Activated CD4-positive, alpha-beta T cell treated with anti-CD3 and anti-CD28 coated beads, Interleukin-2, amount 10 ng/mL, durations not matched to agents 24 days and 14 days (primary cell): ENCODE measurements at regions of chr5 and their contacts with region 1.

Region 1: DNA sequence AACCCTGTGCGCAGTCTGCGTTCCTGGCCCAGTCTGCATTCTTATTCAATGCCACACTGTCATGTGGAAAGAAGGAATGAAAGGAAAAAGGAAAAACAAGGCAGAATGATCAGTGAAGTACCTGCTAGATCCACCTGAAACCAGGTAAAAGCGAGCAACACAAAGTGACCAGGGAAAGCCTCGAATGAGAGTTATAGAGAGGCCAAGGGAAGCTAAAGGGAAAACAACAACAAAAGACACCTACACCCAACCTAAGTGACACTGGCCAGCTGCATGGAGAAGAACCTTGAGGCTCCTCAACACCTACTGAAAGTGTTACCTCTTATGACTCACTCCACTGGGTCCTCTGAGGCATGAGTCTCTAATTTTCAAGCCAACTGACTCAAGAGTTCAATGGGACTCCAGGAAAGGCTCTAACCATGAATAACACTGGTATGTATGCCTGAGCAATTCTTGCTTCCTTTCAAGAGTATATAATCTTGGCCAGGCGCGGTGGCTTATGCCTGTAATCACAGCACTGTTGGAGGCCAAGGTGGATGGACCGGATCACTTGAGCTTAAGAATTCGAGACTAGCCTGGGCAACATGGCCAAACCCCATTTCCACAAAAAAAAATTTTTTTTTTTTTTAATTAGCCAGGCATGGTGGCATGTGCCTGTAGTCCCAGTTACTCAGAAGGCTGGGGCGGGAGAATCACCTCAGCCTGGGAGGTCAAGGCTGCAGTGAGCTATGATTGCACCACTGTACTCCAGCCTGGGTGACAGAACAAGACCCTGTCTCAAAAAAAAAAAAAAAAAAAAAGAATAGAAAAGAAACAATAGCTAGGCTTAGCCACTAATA is 29.0 kb downstream of the MTMR12 start:
- DNase-seq: peak; percentile 61
- H3K4me3 Mint-ChIP-seq: no peak overlapping the region
- H3K27ac Mint-ChIP-seq: peak overlapping the region; percentile 14
- H3K4me1 Mint-ChIP-seq: peaks cover 36% of the 10 kb centered on the region
- H3K27me3 Mint-ChIP-seq: no peaks in the 10 kb centered on the region

Region 2: DNA sequence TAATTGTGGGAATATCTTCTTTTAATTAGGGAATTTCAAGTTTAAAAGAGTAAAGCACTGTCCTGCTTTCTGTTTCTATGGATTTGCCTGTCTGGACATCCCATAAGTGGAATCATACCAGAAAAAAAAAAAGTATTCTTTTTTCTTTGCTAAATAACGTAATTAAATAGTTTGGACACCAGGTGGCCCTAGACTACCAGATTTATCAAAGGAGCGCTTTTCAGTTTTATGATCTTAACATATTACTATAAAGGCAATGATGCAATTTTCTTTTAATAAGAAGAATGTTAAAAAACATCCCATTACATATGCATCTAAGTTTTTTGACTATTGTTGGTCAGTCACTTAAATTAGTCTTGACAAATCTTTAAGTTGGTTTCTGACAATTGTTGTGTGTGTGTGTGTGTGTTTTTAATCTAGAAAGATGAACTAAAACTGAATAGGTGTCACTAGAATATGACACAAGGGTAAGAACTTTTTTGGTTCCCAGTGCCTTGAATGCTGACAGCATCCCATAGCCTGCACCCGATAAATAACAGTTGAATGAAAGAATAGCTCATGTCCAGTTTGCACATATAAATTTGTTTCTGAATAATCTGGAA is 702.2 kb before region 1 on chr5:
- intact Hi-C with region 1: loop called (anchors 5 kb)
- DNase-seq: no peak
- H3K4me3 Mint-ChIP-seq: no peak overlapping the region
- H3K27ac Mint-ChIP-seq: no peak overlapping the region
- H3K4me1 Mint-ChIP-seq: no peaks in the 10 kb centered on the region
- H3K27me3 Mint-ChIP-seq: peaks cover 15% of the 10 kb centered on the region

Region 3: DNA sequence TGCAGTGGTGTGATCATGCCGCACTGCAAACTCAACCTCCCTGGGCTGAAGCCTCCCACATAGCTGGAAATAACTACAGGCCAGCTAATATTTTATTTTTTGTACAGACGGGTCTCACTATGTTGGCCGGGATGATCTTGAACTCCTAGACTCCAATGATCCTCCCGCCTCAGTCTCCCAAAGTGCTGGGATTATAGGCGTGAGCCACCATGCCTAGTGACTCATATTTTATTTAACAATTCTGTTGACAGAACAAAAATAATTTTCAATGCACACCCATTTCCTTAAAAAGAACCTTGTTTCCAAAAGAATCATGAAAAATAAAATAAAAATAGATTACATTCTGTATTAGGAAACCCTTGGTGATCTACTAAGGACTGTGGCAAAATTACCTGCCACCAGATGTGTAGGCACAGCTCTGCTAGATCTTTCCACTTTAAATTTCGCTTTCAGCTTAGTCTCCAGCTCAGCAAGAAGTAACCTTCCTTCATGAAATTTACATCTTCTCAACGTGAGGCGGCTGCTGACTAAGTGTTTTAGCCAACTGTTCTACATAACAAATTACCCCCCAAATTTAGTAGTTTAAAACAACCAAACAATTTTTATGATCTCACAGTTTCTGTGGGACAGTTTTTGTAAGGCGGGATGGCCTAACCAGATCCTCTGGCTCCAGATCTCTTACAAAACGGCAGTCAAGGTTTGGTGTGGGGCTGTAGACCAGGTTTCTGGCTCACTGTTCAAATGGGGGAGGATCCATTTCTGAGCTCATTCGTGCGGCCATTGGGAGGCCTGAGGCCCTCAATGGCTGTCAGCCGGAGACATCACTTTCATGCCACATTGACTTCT is 77.0 kb before region 1 on chr5:
- intact Hi-C with region 1: loop called (anchors 2 kb)
- DNase-seq: no peak
- H3K4me3 Mint-ChIP-seq: no peak overlapping the region
- H3K27ac Mint-ChIP-seq: peak overlapping the region; percentile 62
- H3K4me1 Mint-ChIP-seq: peaks cover 17% of the 10 kb centered on the region
- H3K27me3 Mint-ChIP-seq: no peaks in the 10 kb centered on the region

Region 4: DNA sequence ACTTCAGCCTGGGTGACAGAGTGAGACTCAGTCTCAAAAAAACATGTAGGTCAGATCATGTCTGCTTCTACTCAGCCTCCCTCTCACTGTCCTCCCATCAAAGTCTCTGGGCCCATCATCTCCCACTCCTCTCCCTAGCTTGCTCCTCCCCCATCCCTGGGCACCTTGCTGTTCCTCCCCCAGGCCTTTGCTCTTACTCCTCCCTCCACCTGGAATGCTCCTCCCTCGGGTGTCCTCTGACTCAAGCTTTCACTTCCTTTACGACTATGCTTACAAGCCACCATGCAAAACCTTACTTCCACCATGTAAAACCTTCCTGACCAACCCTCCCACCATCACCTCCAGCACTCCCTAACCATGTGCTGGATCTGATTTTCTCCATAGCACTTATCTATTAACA is 22.6 kb before region 1 on chr5:
- intact Hi-C with region 1: loop called (anchors 2 kb)
- DNase-seq: peak; percentile 61
- H3K4me3 Mint-ChIP-seq: no peak overlapping the region
- H3K27ac Mint-ChIP-seq: peak overlapping the region; percentile 64
- H3K4me1 Mint-ChIP-seq: peaks cover 16% of the 10 kb centered on the region
- H3K27me3 Mint-ChIP-seq: no peaks in the 10 kb centered on the region

Region 5: DNA sequence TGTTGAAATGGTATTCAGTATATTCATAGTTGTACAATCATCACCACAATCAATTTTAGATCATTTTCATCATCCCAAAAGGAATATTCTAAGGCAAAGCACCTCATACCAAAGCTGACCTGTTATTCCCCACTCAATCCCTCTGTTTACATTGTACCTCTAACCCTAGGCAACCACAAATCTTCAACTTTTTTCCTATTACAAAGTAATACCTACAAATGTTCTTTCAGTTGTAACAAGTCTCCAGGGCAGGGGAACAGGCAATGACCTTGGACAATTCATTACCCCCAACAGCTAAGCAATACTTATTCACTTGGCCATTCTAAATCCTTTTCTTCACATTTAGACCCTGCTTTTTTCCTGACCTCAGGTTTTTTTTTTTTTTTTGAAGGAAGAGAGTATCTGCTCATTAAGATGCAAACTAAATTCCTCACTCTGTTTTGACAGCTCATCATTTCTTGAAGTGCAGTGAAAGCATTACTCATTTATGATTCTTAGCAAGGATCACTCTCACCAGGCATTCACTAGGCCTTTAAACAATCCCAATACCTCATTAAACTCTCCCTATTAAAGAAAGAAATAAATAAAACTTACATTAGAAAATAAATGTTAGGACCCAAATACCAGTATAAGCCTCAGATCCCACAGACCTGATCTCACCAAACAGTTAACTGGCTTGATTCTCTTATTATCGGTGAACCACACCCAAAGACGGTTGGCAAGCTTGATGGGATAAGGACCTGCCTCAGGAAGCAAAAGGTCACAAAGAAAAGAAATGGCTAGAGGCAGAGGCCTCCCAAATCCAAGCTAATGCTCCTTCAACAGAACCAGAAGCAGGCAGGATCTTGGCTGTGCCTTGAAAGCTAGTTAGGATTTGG is 13.7 kb after region 1 on chr5:
- intact Hi-C with region 1: loop called (anchors 1 kb)
- DNase-seq: no peak
- H3K4me3 Mint-ChIP-seq: peak overlapping the region; percentile 7
- H3K27ac Mint-ChIP-seq: peak overlapping the region; percentile 79
- H3K4me1 Mint-ChIP-seq: peaks cover 33% of the 10 kb centered on the region
- H3K27me3 Mint-ChIP-seq: no peaks in the 10 kb centered on the region

Region 6: GRCh38 chr5:32312647-32313523 is 29.1 kb after region 1 on chr5 and contains the start of gene MTMR12:
- intact Hi-C with region 1: loop called (anchors 1 kb)
- DNase-seq: peak; percentile 100
- H3K4me3 Mint-ChIP-seq: peak within 1 kb of the TSS; percentile 96
- H3K27ac Mint-ChIP-seq: peak within 1 kb of the TSS; percentile 87
- H3K4me1 Mint-ChIP-seq: peaks cover 28% of the 10 kb centered on the region
- H3K27me3 Mint-ChIP-seq: no peaks in the 10 kb centered on the region
- total RNA-seq, gene MTMR12: 26.5 and 29.8 TPM in 2 replicates

Region 7: GRCh38 chr5:32542216-32543059 is 258.7 kb after region 1 on chr5:
- intact Hi-C with region 1: loop called (anchors 5 kb)
- DNase-seq: peak; percentile 85
- H3K4me3 Mint-ChIP-seq: peak overlapping the region; percentile 57
- H3K27ac Mint-ChIP-seq: peak overlapping the region; percentile 91
- H3K4me1 Mint-ChIP-seq: peaks cover 46% of the 10 kb centered on the region
- H3K27me3 Mint-ChIP-seq: no peaks in the 10 kb centered on the region

Region 8: DNA sequence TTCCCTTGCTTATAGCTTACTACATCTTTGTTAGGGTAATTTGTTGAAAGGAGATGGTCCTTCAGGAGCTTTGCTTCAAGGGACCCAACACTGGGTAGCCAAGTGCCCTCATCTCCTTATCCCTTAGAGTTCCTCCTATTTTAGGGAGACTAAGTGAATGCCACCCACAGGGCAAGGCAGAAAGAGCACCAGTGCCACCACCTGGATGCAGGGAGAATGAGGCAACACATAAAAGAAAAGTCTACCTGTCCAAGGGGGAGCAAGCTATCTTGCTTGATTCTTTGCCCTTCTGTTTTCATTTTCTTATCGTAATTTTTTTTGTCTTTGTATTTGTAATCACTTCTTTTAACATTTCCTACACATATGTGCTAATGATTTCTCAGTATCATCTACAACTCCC is 632.9 kb after region 1 on chr5:
- intact Hi-C with region 1: no loop called
- DNase-seq: no peak
- H3K4me3 Mint-ChIP-seq: no peak overlapping the region
- H3K27ac Mint-ChIP-seq: no peak overlapping the region
- H3K4me1 Mint-ChIP-seq: no peaks in the 10 kb centered on the region
- H3K27me3 Mint-ChIP-seq: no peaks in the 10 kb centered on the region